ENCODE measurements at regions of chr17 and their contacts with region 1.

Region 1: DNA sequence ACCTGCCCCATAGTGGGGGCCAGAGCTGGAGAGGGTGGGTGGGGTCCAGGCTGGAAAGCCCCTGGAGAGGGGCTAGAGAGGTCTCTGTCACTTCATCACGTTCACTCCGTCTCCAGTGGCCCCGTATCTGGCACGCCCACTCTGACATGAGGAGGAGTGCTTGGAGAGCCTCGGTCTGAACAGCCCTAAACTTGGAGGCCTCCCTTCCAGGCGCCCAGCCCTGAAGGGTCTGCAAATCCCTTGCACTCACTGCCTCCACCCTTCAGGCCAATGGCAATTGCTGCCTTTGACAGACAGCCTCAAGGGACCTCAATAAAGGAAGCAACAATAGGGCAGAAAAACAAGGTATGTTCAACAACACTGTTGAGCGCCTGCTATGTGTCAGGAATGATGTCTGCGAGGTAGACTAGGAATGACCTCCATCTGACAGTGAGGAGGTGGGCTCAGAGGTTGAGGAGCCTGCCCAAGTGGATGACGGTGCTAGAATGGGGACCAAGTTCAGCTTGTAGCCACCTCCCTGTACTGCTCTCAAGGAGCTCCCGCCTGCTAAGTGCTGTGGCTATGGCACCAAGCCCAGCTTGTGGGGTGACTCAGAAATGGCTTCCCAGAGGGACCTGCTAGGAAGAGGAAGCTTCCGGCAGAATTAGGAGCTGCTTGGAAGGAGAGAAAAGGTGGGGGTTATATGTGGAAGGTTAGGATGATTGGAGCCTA is 2.9 kb upstream of the EPX start:
- DNase-seq: peak; percentile 58 to 73
- ATAC-seq: peak in 1 of 4 donors; percentile 38
- H3K4me3 ChIP-seq: no peak overlapping the region
- H3K27ac ChIP-seq: no peak overlapping the region
- H3K4me1 ChIP-seq: no peaks in the 10 kb centered on the region
- H3K27me3 ChIP-seq: peaks cover 0 to 30% (median 9%) of the 10 kb centered on the region in 3 donors
- CTCF ChIP-seq: no peak

Region 2: DNA sequence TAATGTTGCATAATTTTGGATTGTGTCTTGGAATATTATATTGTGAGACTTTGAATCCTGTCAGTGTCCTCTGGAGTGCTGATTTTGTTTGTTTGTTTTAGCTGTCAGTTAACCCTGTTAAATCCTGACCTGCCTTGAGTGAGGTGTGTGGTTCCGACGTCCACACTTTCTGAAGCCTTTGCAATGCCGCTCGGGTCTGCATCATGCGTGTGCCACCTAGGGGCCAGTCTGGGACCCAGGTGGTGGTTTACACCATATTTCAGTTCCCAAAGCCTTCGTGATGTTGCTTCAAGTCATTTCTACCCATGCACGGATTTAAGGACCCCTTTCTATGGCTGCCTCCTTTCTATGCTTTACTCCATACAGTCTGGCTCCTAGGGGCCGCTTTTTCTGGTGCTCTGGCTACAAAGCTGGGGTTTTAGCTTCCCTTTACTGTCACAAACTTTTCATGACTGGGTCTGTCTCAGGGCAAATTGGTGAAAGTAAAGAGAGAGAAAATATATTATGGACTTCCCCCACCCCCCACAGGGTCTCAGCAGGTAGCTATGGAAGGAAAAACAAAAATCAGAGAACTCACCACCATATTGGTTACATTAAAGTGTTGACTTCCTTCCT is 52.8 kb before region 1 on chr17:
- intact Hi-C with region 1: loop called in 1 of 2 experiments (anchors 5 kb)
- DNase-seq: no peak
- ATAC-seq: no peak
- H3K4me3 ChIP-seq: no peak overlapping the region
- H3K27ac ChIP-seq: no peak overlapping the region
- H3K4me1 ChIP-seq: no peaks in the 10 kb centered on the region
- H3K27me3 ChIP-seq: peaks cover 2 to 27% (median 13%) of the 10 kb centered on the region in 3 donors
- CTCF ChIP-seq: no peak

Region 3: DNA sequence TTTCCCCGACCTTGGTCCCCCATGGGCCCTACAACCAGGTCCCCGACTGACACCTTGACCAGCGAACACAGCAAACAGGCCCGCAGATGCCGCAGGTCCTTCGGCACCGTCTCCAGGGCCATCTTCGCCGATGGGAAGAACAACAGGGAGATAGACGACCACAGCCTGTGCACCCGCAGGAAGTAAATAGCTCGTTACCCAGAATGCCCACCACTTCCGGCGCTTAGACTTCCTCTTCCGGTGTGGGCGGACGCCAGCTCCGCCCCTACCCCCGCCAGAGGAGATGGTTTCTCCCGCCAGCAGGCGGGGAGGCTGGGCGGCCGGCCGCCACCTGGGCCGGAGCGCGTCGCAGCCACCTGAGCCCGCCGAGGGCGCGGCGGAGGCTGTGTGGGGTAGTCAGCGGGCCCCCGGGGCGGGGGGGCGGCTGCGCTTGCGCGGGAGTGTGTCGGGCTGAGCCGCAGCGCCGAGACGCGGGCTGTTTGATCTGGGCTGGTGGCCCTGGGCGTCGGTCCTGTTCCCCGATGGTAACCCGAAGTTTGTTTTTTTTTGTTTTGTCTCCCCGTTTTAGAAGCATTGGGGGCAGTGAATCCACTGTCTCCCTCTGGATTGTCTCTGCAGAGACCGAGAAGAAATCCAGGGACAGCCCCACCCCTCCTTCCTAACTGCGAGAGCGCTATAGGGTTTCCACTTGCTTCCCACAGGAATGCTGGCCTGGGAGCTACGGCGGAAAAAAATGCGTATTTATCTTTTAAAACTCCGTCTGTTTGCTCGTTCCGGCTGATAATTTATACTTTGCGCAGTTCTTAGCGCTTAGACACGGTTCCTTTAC is 162.6 kb after region 1 on chr17 and contains the start of gene SUPT4H1:
- intact Hi-C with region 1: no loop called
- DNase-seq: peak; percentile 85 to 94
- ATAC-seq: peak; percentile 98 to 99 (median 98)
- H3K4me3 ChIP-seq: peak within 1 kb of the TSS; percentile 85
- H3K27ac ChIP-seq: peak within 1 kb of the TSS; percentile 94
- H3K4me1 ChIP-seq: peaks cover 15% of the 10 kb centered on the region
- H3K27me3 ChIP-seq: no peaks in the 10 kb centered on the region
- CTCF ChIP-seq: no peak
- total RNA-seq, gene SUPT4H1: 52.1 to 58.9 (median 56.2) TPM